OCI-LY7 (cell line): ENCODE measurements at regions of chr20 and their contacts with region 1.

Region 1: GRCh38 chr20:5126512-5127203 is at the start of gene CDS2:
- DNase-seq: peak; percentile 99
- H3K4me3 ChIP-seq: peak within 1 kb of the TSS; percentile 81
- H3K27ac ChIP-seq: peak within 1 kb of the TSS; percentile 80
- H3K4me1 ChIP-seq: peaks cover 34% of the 10 kb centered on the region
- CTCF ChIP-seq: peak; percentile 80
- total RNA-seq, gene CDS2: 16.5 and 16.6 TPM in 2 replicates

Region 2: DNA sequence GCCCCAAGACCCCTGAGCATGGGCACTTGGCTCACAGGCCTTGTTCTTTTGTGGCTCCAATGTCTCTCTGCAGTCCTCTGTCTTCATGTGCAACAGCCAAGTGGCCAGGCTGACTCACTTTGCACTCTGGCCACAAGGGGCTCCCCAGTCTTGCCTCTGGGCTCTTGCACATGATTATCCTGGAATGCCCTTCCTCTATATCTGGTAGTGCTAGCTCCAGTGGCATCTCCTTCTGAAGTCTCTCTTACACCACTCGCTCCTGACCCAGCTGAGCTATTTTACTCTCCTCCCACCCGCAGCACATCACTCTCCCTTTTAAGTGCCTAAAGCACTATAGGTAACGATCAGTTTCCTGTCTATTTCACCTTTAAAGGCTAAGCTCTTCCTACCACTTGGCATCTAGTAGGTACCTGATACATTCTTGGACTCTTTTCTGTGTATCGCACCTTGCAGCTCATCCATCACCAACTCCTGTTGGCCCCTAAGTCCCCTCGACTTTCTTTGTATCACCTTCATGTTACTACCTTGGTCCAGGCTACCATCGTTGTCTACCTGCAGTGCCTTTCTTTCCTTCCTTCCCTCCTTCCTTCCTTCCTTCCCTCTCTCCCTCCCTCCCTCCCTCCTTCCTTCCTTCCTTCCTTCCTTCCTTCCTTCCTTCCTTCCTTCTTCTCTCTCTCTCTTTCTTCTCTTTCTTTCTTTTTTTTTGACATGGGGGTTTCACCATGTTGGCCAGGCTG is 899.4 kb before region 1 on chr20:
- CTCF ChIA-PET with region 1: interaction called, 13 read pairs
- POLR2A ChIA-PET with region 1: no interaction called
- intact Hi-C with region 1: no loop called
- DNase-seq: peak; percentile 8
- H3K4me3 ChIP-seq: no peak overlapping the region
- H3K27ac ChIP-seq: no peak overlapping the region
- H3K4me1 ChIP-seq: no peaks in the 10 kb centered on the region
- CTCF ChIP-seq: peak; percentile 58

Region 3: DNA sequence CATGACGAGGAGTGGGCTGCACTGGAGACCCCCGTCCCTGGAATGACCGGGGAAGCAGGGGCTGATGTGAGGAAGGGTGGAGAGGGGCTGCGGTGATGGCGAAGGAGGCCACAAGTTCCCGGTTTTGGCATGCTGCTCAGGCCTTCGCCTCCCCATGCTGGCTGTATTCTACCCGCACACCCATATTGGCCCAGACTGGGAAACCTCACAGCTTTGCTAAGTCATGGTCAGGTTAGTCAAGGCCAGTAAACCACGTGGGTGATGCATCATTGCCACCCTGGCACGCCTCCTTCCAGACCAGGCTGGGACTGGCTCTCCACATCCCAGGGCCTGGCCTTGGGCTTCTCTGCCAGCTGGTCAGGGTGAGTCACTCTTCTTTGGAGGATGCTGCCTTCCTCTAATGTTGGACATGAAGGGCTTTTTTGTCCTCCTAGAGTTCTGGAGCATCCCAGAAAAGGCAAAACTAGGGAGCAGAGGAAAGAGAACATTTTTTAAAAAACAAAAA is 60.7 kb before region 1 on chr20:
- CTCF ChIA-PET with region 1: no interaction called
- POLR2A ChIA-PET with region 1: no interaction called
- intact Hi-C with region 1: no loop called
- DNase-seq: no peak
- H3K4me3 ChIP-seq: no peak overlapping the region
- H3K27ac ChIP-seq: no peak overlapping the region
- H3K4me1 ChIP-seq: no peaks in the 10 kb centered on the region
- CTCF ChIP-seq: no peak

Region 4: GRCh38 chr20:5448449-5449118 is 321.9 kb after region 1 on chr20:
- CTCF ChIA-PET with region 1: no interaction called
- POLR2A ChIA-PET with region 1: no interaction called
- intact Hi-C with region 1: loop called (anchors 5 kb)
- DNase-seq: peak; percentile 57
- H3K4me3 ChIP-seq: no peak overlapping the region
- H3K27ac ChIP-seq: no peak overlapping the region
- H3K4me1 ChIP-seq: no peaks in the 10 kb centered on the region
- CTCF ChIP-seq: peak; percentile 92